GM12878 (cell line): ENCODE measurements at regions of chr2 and their contacts with region 1.

Region 1: GRCh38 chr2:210617732-210618330 is 61.4 kb downstream of the CPS1 start:
- DNase-seq: no peak
- ATAC-seq: peak; percentile 89
- H3K4me3 ChIP-seq: no peak overlapping the region
- H3K27ac ChIP-seq: no peak overlapping the region
- H3K4me1 ChIP-seq: no peaks in the 10 kb centered on the region
- H3K27me3 ChIP-seq: no peaks in the 10 kb centered on the region
- CTCF ChIP-seq: peak; percentile 50 to 65 (median 51); a peak in 5 of 6 replicates
- EP300 ChIP-seq: no peak
- POLR2A ChIP-seq: no peak
- RAD21 ChIP-seq: peak; percentile 73

Region 2: DNA sequence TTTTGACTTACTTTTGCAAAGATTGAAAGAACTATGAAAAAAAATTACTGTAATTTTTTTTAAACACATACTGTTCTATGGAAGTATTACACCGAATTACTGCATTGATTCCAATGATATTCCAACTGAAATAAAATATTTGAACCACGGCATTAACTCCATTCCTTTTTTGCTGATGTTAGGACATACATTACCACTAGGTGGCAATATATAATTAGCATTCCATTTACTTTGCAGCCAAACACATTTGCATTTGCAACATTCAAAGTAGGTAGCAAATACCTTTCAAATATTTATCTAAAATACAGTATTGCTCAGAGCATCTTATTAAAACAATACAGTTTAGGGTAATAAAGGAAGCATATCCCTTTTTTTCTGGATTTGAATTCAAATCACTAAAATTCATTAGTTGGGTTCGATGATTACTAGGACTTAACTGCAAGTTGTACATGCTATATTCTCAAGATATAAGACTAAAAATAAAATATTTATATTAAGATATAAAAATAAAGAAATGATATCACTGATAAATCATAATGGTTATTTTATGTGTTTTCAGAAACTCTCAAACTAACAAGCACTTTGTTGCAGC is 172.6 kb before region 1 on chr2:
- CTCF ChIA-PET with region 1: interaction called, 7 read pairs
- POLR2A ChIA-PET with region 1: no interaction called
- RAD21 ChIA-PET with region 1: no interaction called
- SMC1A ChIA-PET with region 1: interaction called, 5 read pairs
- in situ Hi-C with region 1: no loop called
- intact Hi-C with region 1: loop called (anchors 10 kb)
- DNase-seq: no peak
- ATAC-seq: peak; percentile 58
- H3K4me3 ChIP-seq: no peak overlapping the region
- H3K27ac ChIP-seq: no peak overlapping the region
- H3K4me1 ChIP-seq: peaks cover 5% of the 10 kb centered on the region
- H3K27me3 ChIP-seq: no peaks in the 10 kb centered on the region
- CTCF ChIP-seq: peak; percentile 52 to 62 (median 53)
- EP300 ChIP-seq: no peak
- POLR2A ChIP-seq: no peak
- RAD21 ChIP-seq: peak; percentile 64

Region 3: GRCh38 chr2:210496512-210496911 is 121.3 kb before region 1 on chr2:
- CTCF ChIA-PET with region 1: no interaction called
- POLR2A ChIA-PET with region 1: no interaction called
- RAD21 ChIA-PET with region 1: no interaction called
- SMC1A ChIA-PET with region 1: no interaction called
- in situ Hi-C with region 1: no loop called
- intact Hi-C with region 1: no loop called
- DNase-seq: no peak
- ATAC-seq: peak; percentile 53
- H3K4me3 ChIP-seq: no peak overlapping the region
- H3K27ac ChIP-seq: no peak overlapping the region
- H3K4me1 ChIP-seq: no peaks in the 10 kb centered on the region
- H3K27me3 ChIP-seq: no peaks in the 10 kb centered on the region
- CTCF ChIP-seq: no peak
- EP300 ChIP-seq: no peak
- POLR2A ChIP-seq: no peak
- RAD21 ChIP-seq: no peak

Region 4: DNA sequence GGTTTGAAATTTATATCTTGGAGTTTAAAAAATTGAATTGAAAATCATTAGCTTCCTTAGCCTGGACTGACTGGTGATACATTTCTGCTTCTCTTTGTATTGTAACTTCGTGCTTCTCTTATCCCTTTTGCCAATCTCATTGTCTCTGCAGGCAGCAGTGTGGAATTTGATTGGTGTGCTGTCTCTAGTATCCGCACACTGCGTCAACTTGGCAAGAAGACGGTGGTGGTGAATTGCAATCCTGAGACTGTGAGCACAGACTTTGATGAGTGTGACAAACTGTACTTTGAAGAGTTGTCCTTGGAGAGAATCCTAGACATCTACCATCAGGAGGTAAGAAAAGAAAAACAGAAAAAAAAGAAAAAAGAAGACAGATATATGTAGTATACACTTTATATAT is 24.5 kb after region 1 on chr2:
- CTCF ChIA-PET with region 1: no interaction called
- POLR2A ChIA-PET with region 1: no interaction called
- RAD21 ChIA-PET with region 1: no interaction called
- SMC1A ChIA-PET with region 1: no interaction called
- in situ Hi-C with region 1: no loop called
- intact Hi-C with region 1: no loop called
- DNase-seq: no peak
- ATAC-seq: no peak
- H3K4me3 ChIP-seq: no peak overlapping the region
- H3K27ac ChIP-seq: no peak overlapping the region
- H3K4me1 ChIP-seq: no peaks in the 10 kb centered on the region
- H3K27me3 ChIP-seq: no peaks in the 10 kb centered on the region
- CTCF ChIP-seq: no peak
- EP300 ChIP-seq: no peak
- POLR2A ChIP-seq: no peak
- RAD21 ChIP-seq: no peak

Region 5: GRCh38 chr2:211035548-211036185 is 417.8 kb after region 1 on chr2:
- CTCF ChIA-PET with region 1: interaction called, 14 read pairs
- POLR2A ChIA-PET with region 1: no interaction called
- RAD21 ChIA-PET with region 1: interaction called, 5 read pairs
- SMC1A ChIA-PET with region 1: interaction called, 9 read pairs
- in situ Hi-C with region 1: no loop called
- intact Hi-C with region 1: loop called (anchors 1 kb)
- DNase-seq: no peak
- ATAC-seq: peak; percentile 65
- H3K4me3 ChIP-seq: no peak overlapping the region
- H3K27ac ChIP-seq: no peak overlapping the region
- H3K4me1 ChIP-seq: no peaks in the 10 kb centered on the region
- H3K27me3 ChIP-seq: no peaks in the 10 kb centered on the region
- CTCF ChIP-seq: peak; percentile 50 to 61 (median 50)
- EP300 ChIP-seq: no peak
- POLR2A ChIP-seq: no peak
- RAD21 ChIP-seq: peak; percentile 50

Region 6: GRCh38 chr2:211085056-211085680 is 467.3 kb after region 1 on chr2:
- CTCF ChIA-PET with region 1: no interaction called
- POLR2A ChIA-PET with region 1: no interaction called
- RAD21 ChIA-PET with region 1: no interaction called
- SMC1A ChIA-PET with region 1: interaction called, 3 read pairs
- in situ Hi-C with region 1: no loop called
- intact Hi-C with region 1: loop called (anchors 5 kb)
- DNase-seq: no peak
- ATAC-seq: peak; percentile 73
- H3K4me3 ChIP-seq: no peak overlapping the region
- H3K27ac ChIP-seq: no peak overlapping the region
- H3K4me1 ChIP-seq: no peaks in the 10 kb centered on the region
- H3K27me3 ChIP-seq: no peaks in the 10 kb centered on the region
- CTCF ChIP-seq: peak; percentile 44 to 57 (median 50); a peak in 5 of 6 replicates
- EP300 ChIP-seq: no peak
- POLR2A ChIP-seq: no peak
- RAD21 ChIP-seq: peak; percentile 40; the same call in 1 of the 2 replicates

Region 7: DNA sequence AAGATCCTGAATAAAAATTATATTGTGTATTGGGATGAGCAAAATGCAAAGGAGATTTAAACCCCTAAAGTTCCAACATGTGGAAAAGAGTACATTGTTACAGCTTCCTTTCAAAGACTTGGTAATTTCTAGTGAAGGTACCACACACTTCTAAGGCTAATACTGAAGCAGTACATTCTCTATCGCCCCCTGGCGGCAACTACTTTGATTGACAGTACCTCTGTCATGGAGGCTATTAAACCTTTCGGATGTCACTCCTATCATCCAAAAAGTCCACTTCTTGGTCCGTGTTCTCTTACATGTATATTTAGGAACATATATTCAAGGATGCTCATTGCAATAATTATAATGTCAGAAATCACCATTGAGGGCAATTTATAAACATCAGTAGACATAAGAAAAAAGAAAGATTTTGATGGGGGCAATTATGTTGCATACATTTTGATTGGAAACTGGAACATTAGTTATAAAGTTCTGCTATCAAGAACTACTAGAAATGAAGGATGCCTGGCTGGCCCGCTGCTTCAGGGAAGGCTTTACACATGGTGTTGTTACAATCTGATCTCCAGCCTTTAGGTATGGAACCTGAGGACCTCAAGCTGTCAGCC is 540.1 kb after region 1 on chr2:
- CTCF ChIA-PET with region 1: interaction called, 17 read pairs
- POLR2A ChIA-PET with region 1: no interaction called
- RAD21 ChIA-PET with region 1: interaction called, 3 read pairs
- SMC1A ChIA-PET with region 1: interaction called, 8 read pairs
- in situ Hi-C with region 1: no loop called
- intact Hi-C with region 1: loop called (anchors 1 kb)
- DNase-seq: peak; percentile 4
- ATAC-seq: peak; percentile 98
- H3K4me3 ChIP-seq: no peak overlapping the region
- H3K27ac ChIP-seq: no peak overlapping the region
- H3K4me1 ChIP-seq: no peaks in the 10 kb centered on the region
- H3K27me3 ChIP-seq: no peaks in the 10 kb centered on the region
- CTCF ChIP-seq: peak; percentile 73 to 92 (median 79)
- EP300 ChIP-seq: no peak
- POLR2A ChIP-seq: no peak
- RAD21 ChIP-seq: peak; percentile 52